Posterior vena cava (tissue), 2 donors: ENCODE measurements at regions of chr15 and their contacts with region 1.

Region 1: GRCh38 chr15:82767163-82767819 is 38.6 kb downstream of the FSD2 start:
- DNase-seq: no peak

Region 2: GRCh38 chr15:82749951-82750830 is 17.1 kb before region 1 on chr15:
- intact Hi-C with region 1: loop called in 1 of 2 experiments (anchors 1 kb)
- DNase-seq: peak; percentile 97